Activated B cell treated with CpG ODN at 0.5 μM for 24 hours (primary cell): ENCODE measurements at regions of chr9 and their contacts with region 1.

Region 1: GRCh38 chr9:132507746-132508469 is 74.5 kb upstream of the BARHL1 start:
- DNase-seq: peak; percentile 47
- ATAC-seq: peak; percentile 62
- H3K4me3 Mint-ChIP-seq: no peak overlapping the region
- H3K27ac Mint-ChIP-seq: no peak overlapping the region
- H3K4me1 Mint-ChIP-seq: peaks cover 8% of the 10 kb centered on the region
- H3K27me3 Mint-ChIP-seq: peaks cover 12% of the 10 kb centered on the region
- CTCF ChIP-seq: no peak

Region 2: GRCh38 chr9:132451276-132451675 is 56.6 kb before region 1 on chr9:
- CTCF ChIA-PET with region 1: no interaction called
- POLR2A ChIA-PET with region 1: no interaction called
- intact Hi-C with region 1: loop called (anchors 10 kb)
- DNase-seq: no peak
- ATAC-seq: no peak
- H3K4me3 Mint-ChIP-seq: no peak overlapping the region
- H3K27ac Mint-ChIP-seq: no peak overlapping the region
- H3K4me1 Mint-ChIP-seq: no peaks in the 10 kb centered on the region
- H3K27me3 Mint-ChIP-seq: peaks cover 12% of the 10 kb centered on the region
- CTCF ChIP-seq: no peak

Region 3: DNA sequence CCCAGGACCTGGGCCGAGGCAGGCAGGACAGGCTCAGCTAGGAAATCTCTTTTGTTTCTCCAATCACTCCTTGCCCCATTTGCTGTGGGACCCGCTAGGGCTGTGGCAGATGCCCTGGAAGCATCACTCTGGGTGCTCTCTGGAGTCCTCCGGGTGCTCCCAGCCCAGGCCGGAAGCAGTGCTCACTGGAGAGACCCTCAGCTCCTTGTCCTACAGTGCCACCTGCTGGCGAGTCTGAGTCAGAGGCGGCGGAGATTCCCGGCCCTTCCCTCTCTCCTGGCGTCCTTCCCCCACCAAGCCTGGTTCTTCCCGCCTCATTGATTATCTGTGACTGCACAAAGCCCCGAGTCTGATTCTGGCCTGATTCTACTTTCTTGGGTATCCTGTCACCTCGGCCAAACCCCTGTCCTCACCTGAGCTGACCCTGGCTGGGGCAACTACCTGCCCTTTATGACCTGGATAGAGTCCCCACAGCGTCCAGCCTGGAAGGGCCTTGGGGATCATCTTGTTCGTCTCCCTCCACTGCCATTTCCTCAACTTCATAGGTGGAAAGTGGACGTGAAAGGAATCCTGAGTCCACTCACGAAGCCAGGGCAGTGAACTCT is 67.2 kb after region 1 on chr9:
- CTCF ChIA-PET with region 1: no interaction called
- POLR2A ChIA-PET with region 1: no interaction called
- intact Hi-C with region 1: loop called (anchors 2 kb)
- DNase-seq: no peak
- ATAC-seq: no peak
- H3K4me3 Mint-ChIP-seq: no peak overlapping the region
- H3K27ac Mint-ChIP-seq: no peak overlapping the region
- H3K4me1 Mint-ChIP-seq: no peaks in the 10 kb centered on the region
- H3K27me3 Mint-ChIP-seq: peaks cover 41% of the 10 kb centered on the region
- CTCF ChIP-seq: no peak

Region 4: GRCh38 chr9:132694157-132694556 is 186.2 kb after region 1 on chr9:
- CTCF ChIA-PET with region 1: no interaction called
- POLR2A ChIA-PET with region 1: no interaction called
- intact Hi-C with region 1: no loop called
- DNase-seq: no peak
- ATAC-seq: peak; percentile 40
- H3K4me3 Mint-ChIP-seq: no peak overlapping the region
- H3K27ac Mint-ChIP-seq: no peak overlapping the region
- H3K4me1 Mint-ChIP-seq: no peaks in the 10 kb centered on the region
- H3K27me3 Mint-ChIP-seq: peaks cover 3% of the 10 kb centered on the region
- CTCF ChIP-seq: no peak

Region 5: GRCh38 chr9:132901856-132902831 is 394.2 kb after region 1 on chr9:
- CTCF ChIA-PET with region 1: interaction called, 5 read pairs
- POLR2A ChIA-PET with region 1: no interaction called
- intact Hi-C with region 1: loop called (anchors 1 kb)
- DNase-seq: peak; percentile 57
- ATAC-seq: peak; percentile 98
- H3K4me3 Mint-ChIP-seq: no peak overlapping the region
- H3K27ac Mint-ChIP-seq: no peak overlapping the region
- H3K4me1 Mint-ChIP-seq: peaks cover 5% of the 10 kb centered on the region
- H3K27me3 Mint-ChIP-seq: no peaks in the 10 kb centered on the region
- CTCF ChIP-seq: peak; percentile 54

Region 6: GRCh38 chr9:132973713-132974112 is 465.8 kb after region 1 on chr9:
- CTCF ChIA-PET with region 1: no interaction called
- POLR2A ChIA-PET with region 1: no interaction called
- intact Hi-C with region 1: loop called (anchors 1 kb)
- DNase-seq: no peak
- ATAC-seq: no peak
- H3K4me3 Mint-ChIP-seq: no peak overlapping the region
- H3K27ac Mint-ChIP-seq: no peak overlapping the region
- H3K4me1 Mint-ChIP-seq: peaks cover 13% of the 10 kb centered on the region
- H3K27me3 Mint-ChIP-seq: peaks cover 18% of the 10 kb centered on the region
- CTCF ChIP-seq: no peak